CD4-positive, alpha-beta memory T cell (primary cell): ENCODE measurements at regions of chr1 and their contacts with region 1.

Region 1: GRCh38 chr1:207828485-207829158 is 76.8 kb downstream of the CD46 start:
- DNase-seq: peak; percentile 58 to 72 (median 62)
- H3K4me3 ChIP-seq: no peak overlapping the region
- H3K4me3 Mint-ChIP-seq: peak overlapping the region in 4 of 8 donors; percentile 0 to 55 (median 26)
- H3K27ac ChIP-seq: peak overlapping the region; percentile 86
- H3K27ac Mint-ChIP-seq: peak overlapping the region; percentile 71 to 100 (median 99)
- H3K4me1 ChIP-seq: peaks cover 95% of the 10 kb centered on the region
- H3K4me1 Mint-ChIP-seq: peaks cover 73 to 95% (median 88%) of the 10 kb centered on the region in 4 donors
- H3K27me3 ChIP-seq: no peaks in the 10 kb centered on the region
- H3K27me3 Mint-ChIP-seq: peaks cover 2 to 4% of the 10 kb centered on the region in 2 donors

Region 2: GRCh38 chr1:207751790-207752455 is 76.7 kb before region 1 on chr1 and contains the start of gene CD46:
- CTCF ChIA-PET with region 1: interaction called, 3 read pairs
- POLR2A ChIA-PET with region 1: interaction called, 10 read pairs
- intact Hi-C with region 1: no loop called
- DNase-seq: peak; percentile 91 to 95 (median 92)
- H3K4me3 ChIP-seq: peak within 1 kb of the TSS; percentile 74 to 96
- H3K4me3 Mint-ChIP-seq: peak within 1 kb of the TSS; percentile 96 to 100 (median 100)
- H3K27ac ChIP-seq: peak within 1 kb of the TSS; percentile 79
- H3K27ac Mint-ChIP-seq: peak within 1 kb of the TSS; percentile 92 to 99 (median 98)
- H3K4me1 ChIP-seq: peaks cover 69% of the 10 kb centered on the region
- H3K4me1 Mint-ChIP-seq: peaks cover 54 to 86% (median 66%) of the 10 kb centered on the region in 4 donors
- H3K27me3 ChIP-seq: no peaks in the 10 kb centered on the region
- H3K27me3 Mint-ChIP-seq: no peaks in the 10 kb centered on the region
- total RNA-seq, gene CD46: 217 to 234 TPM

Region 3: DNA sequence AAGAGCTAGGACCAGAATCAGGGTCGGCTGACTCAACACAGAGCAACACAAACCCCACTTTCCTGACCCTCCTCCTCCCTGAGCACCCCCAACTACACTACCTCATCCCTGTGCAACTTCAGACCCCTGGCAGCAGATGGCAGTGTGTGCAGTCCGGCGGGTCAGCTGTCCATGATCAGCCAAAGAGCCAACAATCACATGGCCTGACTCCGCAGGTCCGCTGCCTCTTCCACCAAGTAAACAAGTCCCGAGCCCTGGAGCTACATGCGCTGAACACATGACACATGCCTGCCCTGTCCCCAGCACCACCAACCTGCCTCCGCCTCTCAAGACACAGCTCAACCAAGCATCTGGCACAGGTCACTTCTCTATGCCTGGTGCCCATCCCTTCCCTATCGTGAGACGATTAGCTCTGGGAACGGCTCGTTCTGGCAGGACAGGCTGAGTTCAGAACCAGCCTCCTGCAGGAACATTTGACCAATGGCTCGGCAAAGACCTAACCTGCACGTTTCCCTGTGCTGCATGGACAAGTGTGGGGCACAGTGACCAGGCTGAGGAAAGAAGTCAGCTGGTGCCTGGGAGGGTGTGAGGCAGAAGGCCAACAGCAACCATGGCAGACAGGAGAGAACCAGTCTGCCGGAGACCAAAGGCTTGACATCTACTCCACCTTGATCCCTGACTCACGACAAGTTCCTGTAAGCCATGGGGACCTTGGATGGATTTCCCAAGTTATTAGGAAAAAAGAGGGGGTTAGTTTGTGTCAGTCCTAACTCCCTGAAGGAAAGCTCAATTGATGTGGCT is 16.5 kb before region 1 on chr1:
- CTCF ChIA-PET with region 1: interaction called, 16 read pairs
- POLR2A ChIA-PET with region 1: interaction called, 17 read pairs
- intact Hi-C with region 1: no loop called
- DNase-seq: no peak
- H3K4me3 ChIP-seq: no peak overlapping the region
- H3K4me3 Mint-ChIP-seq: peak overlapping the region in 1 of 8 donors; percentile 17
- H3K27ac ChIP-seq: no peak overlapping the region
- H3K27ac Mint-ChIP-seq: peak overlapping the region in 6 of 7 donors; percentile 13 to 85 (median 61)
- H3K4me1 ChIP-seq: peaks cover 75% of the 10 kb centered on the region
- H3K4me1 Mint-ChIP-seq: peaks cover 51 to 90% (median 74%) of the 10 kb centered on the region in 4 donors
- H3K27me3 ChIP-seq: no peaks in the 10 kb centered on the region
- H3K27me3 Mint-ChIP-seq: no peaks in the 10 kb centered on the region

Region 4: GRCh38 chr1:207868774-207869721 is 40.4 kb after region 1 on chr1:
- CTCF ChIA-PET with region 1: interaction called, 494 read pairs
- POLR2A ChIA-PET with region 1: interaction called, 374 read pairs
- intact Hi-C with region 1: loop called (anchors 1 kb)
- DNase-seq: peak; percentile 66 to 82 (median 78)
- H3K4me3 ChIP-seq: peak overlapping the region in 1 of 2 donors; percentile 79
- H3K4me3 Mint-ChIP-seq: peak overlapping the region; percentile 91 to 98 (median 96)
- H3K27ac ChIP-seq: peak overlapping the region; percentile 81
- H3K27ac Mint-ChIP-seq: peak overlapping the region; percentile 68 to 98 (median 94)
- H3K4me1 ChIP-seq: peaks cover 87% of the 10 kb centered on the region
- H3K4me1 Mint-ChIP-seq: peaks cover 74 to 94% (median 80%) of the 10 kb centered on the region in 4 donors
- H3K27me3 ChIP-seq: no peaks in the 10 kb centered on the region
- H3K27me3 Mint-ChIP-seq: no peaks in the 10 kb centered on the region

Region 5: GRCh38 chr1:207885129-207886032 is 56.8 kb after region 1 on chr1:
- CTCF ChIA-PET with region 1: interaction called, 86 read pairs
- POLR2A ChIA-PET with region 1: interaction called, 46 read pairs
- intact Hi-C with region 1: loop called (anchors 1 kb)
- DNase-seq: peak; percentile 67 to 72 (median 69)
- H3K4me3 ChIP-seq: no peak overlapping the region
- H3K4me3 Mint-ChIP-seq: peak overlapping the region in 4 of 8 donors; percentile 13 to 58 (median 26)
- H3K27ac ChIP-seq: no peak overlapping the region
- H3K27ac Mint-ChIP-seq: peak overlapping the region in 6 of 7 donors; percentile 71 to 98 (median 78)
- H3K4me1 ChIP-seq: peaks cover 32% of the 10 kb centered on the region
- H3K4me1 Mint-ChIP-seq: peaks cover 25 to 39% (median 34%) of the 10 kb centered on the region in 4 donors
- H3K27me3 ChIP-seq: no peaks in the 10 kb centered on the region
- H3K27me3 Mint-ChIP-seq: peaks cover 1 to 14% of the 10 kb centered on the region in 2 donors

Region 6: DNA sequence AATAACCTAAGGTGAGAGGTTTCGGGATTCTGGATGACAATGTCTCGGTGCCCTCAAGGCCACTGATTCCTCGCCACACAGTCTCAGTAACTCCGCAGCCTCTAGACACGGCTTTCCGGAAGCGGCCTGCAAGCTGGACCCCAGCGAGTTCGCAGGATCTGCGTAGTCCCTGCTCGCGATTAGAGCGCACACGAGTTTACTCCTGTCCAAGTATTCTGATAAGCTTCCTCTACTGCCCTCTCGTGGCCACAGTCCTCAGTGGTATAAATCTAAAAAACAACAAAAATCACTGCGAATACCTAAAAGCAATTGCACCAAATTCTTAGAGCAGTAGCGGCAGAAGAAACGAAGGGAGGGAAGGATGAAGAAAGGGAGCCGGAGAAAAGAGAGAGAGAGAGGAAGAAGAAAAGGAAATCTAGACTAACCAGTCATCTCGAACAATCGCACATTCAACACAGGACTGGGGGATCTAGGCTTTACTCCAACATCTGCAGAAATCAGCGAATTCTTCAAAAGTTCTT is 416.6 kb after region 1 on chr1:
- CTCF ChIA-PET with region 1: interaction called, 5 read pairs
- POLR2A ChIA-PET with region 1: no interaction called
- intact Hi-C with region 1: loop called (anchors 10 kb)
- DNase-seq: peak; percentile 65 to 76 (median 69)
- H3K4me3 ChIP-seq: peak overlapping the region; percentile 80 to 88
- H3K4me3 Mint-ChIP-seq: peak overlapping the region; percentile 83 to 93 (median 86)
- H3K27ac ChIP-seq: peak overlapping the region; percentile 50
- H3K27ac Mint-ChIP-seq: peak overlapping the region; percentile 29 to 91 (median 75)
- H3K4me1 ChIP-seq: peaks cover 15% of the 10 kb centered on the region
- H3K4me1 Mint-ChIP-seq: peaks cover 6 to 18% (median 8%) of the 10 kb centered on the region in 4 donors
- H3K27me3 ChIP-seq: peaks cover 13% of the 10 kb centered on the region
- H3K27me3 Mint-ChIP-seq: peaks cover 10 to 15% of the 10 kb centered on the region in 2 donors